ENCODE measurements at regions of chr7 and their contacts with region 1.

Region 1: GRCh38 chr7:13279854-13280435 is 592.5 kb downstream of the ARL4A start:
- DNase-seq: no peak
- CTCF ChIP-seq: peak; percentile 25

Region 2: DNA sequence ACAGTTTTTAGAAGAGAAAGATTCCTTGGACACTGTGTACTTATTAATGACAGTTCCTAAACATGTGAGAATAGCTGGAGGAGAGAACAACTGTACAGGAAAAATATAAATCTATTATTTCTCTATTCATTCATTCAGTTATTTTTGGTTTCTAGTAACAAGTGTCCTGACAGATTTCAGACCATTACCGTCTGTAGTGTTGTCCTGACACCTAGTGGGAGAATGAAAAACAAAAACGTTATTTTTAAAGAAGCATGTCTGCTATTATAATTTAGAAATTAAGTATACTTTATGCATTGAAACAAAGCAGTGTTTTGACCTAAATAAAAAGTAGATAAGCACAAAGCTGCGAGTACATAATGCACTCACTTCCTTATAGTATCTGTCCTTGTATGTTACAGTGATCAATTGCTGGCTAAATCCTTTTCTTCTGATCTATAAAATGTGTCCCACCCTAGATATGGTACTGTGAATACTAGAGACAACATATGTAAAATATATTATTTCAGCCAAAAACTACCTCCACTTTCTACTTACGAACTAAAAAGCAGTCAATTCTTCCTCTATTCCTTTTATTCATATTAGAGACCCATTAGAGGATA is 16.9 kb before region 1 on chr7:
- CTCF ChIA-PET with region 1: interaction called, 11 read pairs
- POLR2A ChIA-PET with region 1: no interaction called
- DNase-seq: peak; percentile 6
- CTCF ChIP-seq: peak; percentile 32

Region 3: GRCh38 chr7:13742811-13743210 is 462.9 kb after region 1 on chr7:
- CTCF ChIA-PET with region 1: interaction called, 11 read pairs
- POLR2A ChIA-PET with region 1: no interaction called
- DNase-seq: no peak
- CTCF ChIP-seq: peak; percentile 38

Region 4: DNA sequence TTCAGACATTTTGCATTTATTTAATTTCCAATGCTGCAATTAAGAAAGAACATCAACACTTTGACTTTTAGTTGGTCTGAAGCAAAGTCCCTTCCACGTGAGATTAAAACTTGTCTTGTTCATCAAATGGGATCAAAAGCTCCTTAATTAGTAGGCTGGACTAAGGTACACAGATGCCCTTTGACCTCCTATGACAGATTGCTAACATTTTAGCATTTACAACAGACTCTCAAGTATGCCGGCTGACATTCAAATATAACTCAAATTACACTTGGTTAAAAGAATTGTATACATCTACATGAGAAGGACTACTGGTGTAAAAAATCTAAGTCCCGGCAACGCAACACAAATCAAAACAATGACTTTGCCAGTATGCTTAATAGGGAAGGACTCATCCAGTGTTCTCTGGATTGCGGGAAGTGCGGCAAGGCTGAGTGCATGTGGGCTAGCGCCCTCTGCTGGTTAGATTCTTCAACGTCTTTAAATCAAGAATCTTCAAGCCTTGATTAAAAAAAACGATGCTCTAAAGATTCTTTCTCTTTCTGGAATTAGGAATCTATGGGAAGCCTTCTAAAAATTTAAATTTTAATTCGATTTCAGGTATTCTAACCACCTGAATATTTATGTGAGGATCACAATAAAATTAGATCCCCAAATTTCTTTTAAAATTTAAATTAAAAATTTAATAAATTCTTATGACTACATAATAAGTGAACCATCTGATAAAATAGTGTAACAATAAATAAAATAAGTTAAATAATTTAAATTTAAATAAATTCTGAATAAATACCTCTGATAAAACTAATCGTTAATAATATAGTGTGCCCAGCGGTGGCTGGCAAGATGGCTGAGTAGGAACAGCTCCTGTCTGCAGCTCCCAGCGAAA is 1177.9 kb after region 1 on chr7:
- CTCF ChIA-PET with region 1: interaction called, 35 read pairs
- POLR2A ChIA-PET with region 1: no interaction called
- DNase-seq: peak; percentile 34
- CTCF ChIP-seq: peak; percentile 79

Region 5: DNA sequence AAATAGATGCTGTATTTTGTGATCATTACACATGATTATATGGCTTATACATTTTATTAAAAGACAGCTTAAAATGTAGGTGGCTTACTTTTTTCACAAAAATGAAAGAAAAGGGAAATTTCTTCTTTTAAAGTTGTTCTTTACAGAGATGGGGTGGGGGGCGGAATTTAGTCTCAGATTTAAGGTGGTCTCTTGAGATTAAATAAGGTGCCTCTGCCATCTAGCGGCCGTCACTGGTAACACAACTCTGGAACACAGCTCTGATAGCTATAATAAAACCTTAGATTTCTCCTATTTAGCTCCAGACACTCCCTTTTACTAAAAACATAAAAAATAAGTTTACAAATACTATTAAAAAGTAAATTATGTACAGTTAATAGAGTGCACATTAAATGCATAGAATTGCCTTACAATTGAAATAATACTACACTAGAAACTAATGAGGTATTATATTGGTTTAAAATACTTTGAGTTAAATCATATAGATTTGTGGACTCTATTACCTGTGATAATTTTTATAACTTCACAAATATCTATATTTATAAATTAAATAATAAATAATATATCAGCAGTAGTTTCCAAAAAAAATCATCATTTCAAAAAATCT is 1411.8 kb after region 1 on chr7:
- CTCF ChIA-PET with region 1: interaction called, 40 read pairs
- POLR2A ChIA-PET with region 1: no interaction called
- DNase-seq: no peak
- CTCF ChIP-seq: peak; percentile 84

Measured in GM10248 (cell line).